ENCODE measurements at regions of chr18 and their contacts with region 1.

Region 1: GRCh38 chr18:13710460-13710859 is 15.9 kb downstream of the FAM210A start:
- DNase-seq: peak; percentile 75
- H3K4me3 Mint-ChIP-seq: peak overlapping the region; percentile 36
- H3K27ac Mint-ChIP-seq: peak overlapping the region; percentile 93
- H3K4me1 Mint-ChIP-seq: peaks cover 48% of the 10 kb centered on the region
- H3K27me3 Mint-ChIP-seq: no peaks in the 10 kb centered on the region
- CTCF ChIP-seq: no peak

Region 2: DNA sequence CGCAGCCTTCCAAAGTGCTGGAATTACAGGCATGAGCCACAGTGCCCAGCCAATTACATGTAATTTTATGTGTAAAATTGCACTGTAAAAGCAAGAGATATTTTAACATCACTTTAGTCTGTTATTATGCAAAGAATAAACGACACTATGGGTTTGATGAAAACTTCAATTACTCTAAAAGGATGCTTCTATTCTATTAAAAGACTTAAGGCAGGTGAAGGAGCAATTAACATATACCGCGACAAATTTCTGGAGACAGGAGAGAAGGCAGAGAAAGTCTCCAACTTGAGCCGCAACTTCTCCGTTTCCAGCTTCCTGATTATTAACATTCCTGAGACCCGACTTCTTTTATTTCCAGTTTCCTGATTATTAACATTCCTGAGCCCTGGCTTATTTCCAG is 37.8 kb before region 1 on chr18:
- CTCF ChIA-PET with region 1: no interaction called
- intact Hi-C with region 1: loop called (anchors 5 kb)
- DNase-seq: no peak
- H3K4me3 Mint-ChIP-seq: no peak overlapping the region
- H3K27ac Mint-ChIP-seq: no peak overlapping the region
- H3K4me1 Mint-ChIP-seq: no peaks in the 10 kb centered on the region
- H3K27me3 Mint-ChIP-seq: no peaks in the 10 kb centered on the region
- CTCF ChIP-seq: no peak

Region 3: DNA sequence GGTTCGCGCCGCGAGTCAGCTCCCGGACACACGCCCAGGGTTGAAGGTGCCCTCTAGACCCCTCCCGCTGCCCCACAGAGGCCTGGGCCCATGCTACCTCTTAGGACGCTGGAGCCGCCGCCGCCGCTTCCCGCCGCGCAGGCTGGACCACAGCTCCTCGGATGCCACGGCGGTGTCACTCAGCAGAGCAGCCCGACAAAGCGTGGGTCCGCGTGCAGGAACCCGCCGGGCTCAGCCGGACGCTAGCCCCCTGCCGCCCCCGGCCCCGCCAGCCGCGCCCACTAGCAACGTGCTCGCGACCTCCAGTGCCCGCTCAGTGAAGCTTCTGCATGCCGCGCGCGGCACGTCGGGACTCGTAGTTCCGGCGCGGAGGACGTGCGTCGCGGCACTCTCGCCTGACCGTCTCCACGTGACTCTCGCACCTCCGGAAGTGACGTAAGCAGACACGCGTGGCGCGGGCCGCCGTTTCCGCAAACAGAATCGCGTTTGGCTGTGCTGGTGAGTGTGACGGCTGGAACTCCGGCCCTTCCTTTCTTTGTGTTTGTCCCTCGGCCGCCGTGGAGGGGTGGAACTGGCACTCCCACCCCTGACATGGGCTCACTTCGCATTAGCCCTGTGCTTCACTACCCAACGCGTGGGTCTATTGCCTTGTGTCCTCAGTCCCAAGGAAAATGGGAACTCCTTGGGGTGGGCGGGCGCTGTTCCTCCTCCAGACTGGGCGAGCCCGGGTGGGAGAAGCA is 15.9 kb after region 1 on chr18 and contains the starts of genes FAM210A and RNMT:
- CTCF ChIA-PET with region 1: interaction called, 5 read pairs
- intact Hi-C with region 1: loop called (anchors 2 kb)
- DNase-seq: peak; percentile 93
- H3K4me3 Mint-ChIP-seq: peak within 1 kb of the TSS; percentile 79
- H3K27ac Mint-ChIP-seq: peak within 1 kb of the TSS; percentile 93
- H3K4me1 Mint-ChIP-seq: peaks cover 31% of the 10 kb centered on the region
- H3K27me3 Mint-ChIP-seq: no peaks in the 10 kb centered on the region
- CTCF ChIP-seq: no peak
- total RNA-seq, gene FAM210A: 20.8 and 25.9 TPM in 2 replicates
- total RNA-seq, gene RNMT: 42.9 and 43.2 TPM in 2 replicates

Region 4: GRCh38 chr18:13762690-13763439 is 52.4 kb after region 1 on chr18:
- CTCF ChIA-PET with region 1: no interaction called
- intact Hi-C with region 1: no loop called
- DNase-seq: no peak
- H3K4me3 Mint-ChIP-seq: no peak overlapping the region
- H3K27ac Mint-ChIP-seq: no peak overlapping the region
- H3K4me1 Mint-ChIP-seq: no peaks in the 10 kb centered on the region
- H3K27me3 Mint-ChIP-seq: no peaks in the 10 kb centered on the region
- CTCF ChIP-seq: no peak

Region 5: DNA sequence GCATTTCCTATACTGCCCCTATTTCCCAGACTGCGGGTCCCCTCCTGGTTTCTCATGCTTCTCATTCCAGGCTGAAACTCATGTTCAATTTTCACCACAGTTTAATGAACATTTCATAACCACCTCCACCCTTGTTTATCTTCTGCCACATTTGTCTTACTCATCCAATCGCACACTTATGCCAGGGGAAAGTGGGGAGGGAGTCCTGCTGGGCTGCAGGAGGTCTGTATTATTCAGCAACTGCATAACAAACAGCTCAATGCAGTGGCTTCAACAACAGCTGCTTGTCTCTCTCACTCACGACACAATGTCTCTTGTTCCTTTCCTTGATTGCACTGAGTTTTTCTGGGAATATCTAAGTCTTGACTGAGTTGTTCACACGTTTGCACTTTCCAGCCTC is 315.7 kb after region 1 on chr18:
- CTCF ChIA-PET with region 1: no interaction called
- intact Hi-C with region 1: no loop called
- DNase-seq: no peak
- H3K4me3 Mint-ChIP-seq: no peak overlapping the region
- H3K27ac Mint-ChIP-seq: no peak overlapping the region
- H3K4me1 Mint-ChIP-seq: no peaks in the 10 kb centered on the region
- H3K27me3 Mint-ChIP-seq: peaks cover 23% of the 10 kb centered on the region
- CTCF ChIP-seq: no peak